ENCODE measurements at regions of chr7 and their contacts with region 1.

Region 1: DNA sequence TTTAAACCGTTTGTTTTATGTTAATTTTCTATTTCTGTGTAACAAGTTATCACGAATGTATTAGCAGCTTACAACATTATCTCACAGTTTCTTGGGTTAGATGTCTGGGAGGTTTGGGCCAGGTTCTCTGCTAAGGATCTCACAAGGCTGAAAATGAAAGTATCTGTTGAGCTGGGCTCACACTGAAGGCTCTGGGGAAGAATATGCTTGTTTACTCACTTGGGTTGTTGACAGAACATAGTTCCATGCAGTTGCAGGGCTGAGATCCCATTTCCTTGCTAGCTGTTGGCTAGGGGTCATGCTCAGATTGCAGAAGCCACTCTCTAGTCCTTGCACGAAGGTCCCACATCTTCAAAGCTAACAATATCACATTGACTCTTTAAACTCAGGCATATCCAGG is 266.6 kb upstream of the GNAI1 start:
- DNase-seq: no peak
- ATAC-seq: no peak
- H3K4me3 Mint-ChIP-seq: no peak overlapping the region
- H3K27ac Mint-ChIP-seq: no peak overlapping the region
- H3K4me1 Mint-ChIP-seq: no peaks in the 10 kb centered on the region
- H3K27me3 Mint-ChIP-seq: no peaks in the 10 kb centered on the region
- CTCF ChIP-seq: no peak

Region 2: DNA sequence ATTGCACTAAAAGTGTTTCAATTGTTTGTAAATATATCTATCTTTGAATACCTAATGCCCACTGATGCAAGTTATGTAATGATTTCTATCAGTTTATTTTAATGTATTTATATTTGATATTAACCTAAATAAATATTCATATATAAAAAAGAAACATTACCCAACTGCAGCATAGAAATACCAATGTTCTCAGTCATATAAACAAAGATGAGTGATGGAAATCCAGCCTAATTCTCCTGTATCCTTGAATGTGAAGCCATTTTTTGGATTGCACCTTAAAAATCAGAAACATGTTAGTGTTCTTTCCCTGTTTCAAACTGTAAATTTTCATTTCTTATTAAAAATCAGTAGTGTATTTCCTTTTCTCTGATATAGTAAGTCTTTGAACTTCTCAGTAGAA is 39.1 kb before region 1 on chr7:
- CTCF ChIA-PET with region 1: no interaction called
- POLR2A ChIA-PET with region 1: no interaction called
- intact Hi-C with region 1: no loop called
- DNase-seq: no peak
- ATAC-seq: no peak
- H3K4me3 Mint-ChIP-seq: no peak overlapping the region
- H3K27ac Mint-ChIP-seq: no peak overlapping the region
- H3K4me1 Mint-ChIP-seq: no peaks in the 10 kb centered on the region
- H3K27me3 Mint-ChIP-seq: no peaks in the 10 kb centered on the region
- CTCF ChIP-seq: no peak

Region 3: DNA sequence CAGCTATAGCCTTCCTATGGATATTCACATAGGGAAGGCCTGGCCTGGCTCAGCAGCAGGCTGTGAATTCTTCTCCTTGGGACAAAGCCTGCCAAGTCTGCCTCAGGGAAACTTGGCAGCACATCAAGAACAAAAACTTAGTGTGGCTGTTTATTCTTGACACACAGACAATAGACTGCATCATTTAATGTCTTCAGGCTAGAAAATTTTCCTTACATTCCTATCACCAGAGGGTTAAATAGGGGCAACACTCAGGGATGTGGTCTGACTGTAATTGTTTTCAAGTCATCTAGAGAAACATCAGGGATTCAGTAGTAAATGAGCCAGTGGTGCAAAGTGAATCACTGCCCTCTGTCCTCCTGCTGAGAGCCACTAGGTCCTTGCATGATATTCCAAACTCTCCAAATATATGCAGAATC is 913.6 kb after region 1 on chr7:
- CTCF ChIA-PET with region 1: no interaction called
- POLR2A ChIA-PET with region 1: interaction called, 18 read pairs
- intact Hi-C with region 1: no loop called
- DNase-seq: no peak
- ATAC-seq: no peak
- H3K4me3 Mint-ChIP-seq: no peak overlapping the region
- H3K27ac Mint-ChIP-seq: no peak overlapping the region
- H3K4me1 Mint-ChIP-seq: no peaks in the 10 kb centered on the region
- H3K27me3 Mint-ChIP-seq: no peaks in the 10 kb centered on the region
- CTCF ChIP-seq: no peak

Measured in activated B cell treated with CpG ODN at 0.5 μM for 24 hours (primary cell).